Vagina (tissue), 2 donors: ENCODE measurements at regions of chr20 and their contacts with region 1.

Region 1: DNA sequence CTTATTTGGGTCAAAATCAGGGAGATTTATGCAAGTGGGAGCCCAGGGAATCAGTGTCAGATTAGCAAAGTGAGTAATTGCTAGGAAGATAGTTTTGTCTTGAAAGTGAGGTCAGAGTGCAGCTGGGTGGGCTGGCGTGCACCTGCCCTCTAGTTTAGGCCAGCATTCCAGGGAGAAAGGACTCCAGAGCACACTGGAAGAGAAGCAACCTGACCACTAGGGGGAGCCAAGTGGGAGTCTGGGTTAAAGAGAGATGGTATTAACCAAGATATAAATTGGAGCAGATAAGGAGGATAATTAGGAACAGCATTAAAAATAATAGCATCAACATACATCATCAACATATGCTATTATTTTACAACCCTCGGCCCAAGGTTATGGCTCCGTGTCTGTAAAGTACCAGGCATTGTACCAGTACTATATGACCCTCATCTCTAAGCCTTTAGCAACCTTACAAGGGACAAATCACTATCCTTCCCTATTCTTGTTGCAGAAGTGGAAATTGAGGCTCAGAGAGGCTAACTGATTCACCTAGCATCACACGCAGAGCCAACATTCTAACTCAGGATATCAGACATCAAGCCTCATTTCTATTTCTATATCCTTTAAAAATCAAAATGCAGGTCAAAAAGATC is 57.8 kb downstream of the SLC2A10 start:
- DNase-seq: no peak
- H3K4me3 ChIP-seq: no peak overlapping the region
- H3K27ac ChIP-seq: no peak overlapping the region
- H3K4me1 ChIP-seq: no peaks in the 10 kb centered on the region
- H3K27me3 ChIP-seq: no peaks in the 10 kb centered on the region
- CTCF ChIP-seq: no peak
- POLR2A ChIP-seq: no peak

Region 2: GRCh38 chr20:47150403-47151152 is 383.3 kb after region 1 on chr20:
- intact Hi-C with region 1: loop called (anchors 10 kb)
- DNase-seq: no peak
- H3K4me3 ChIP-seq: no peak overlapping the region
- H3K27ac ChIP-seq: no peak overlapping the region
- H3K4me1 ChIP-seq: no peaks in the 10 kb centered on the region
- H3K27me3 ChIP-seq: no peaks in the 10 kb centered on the region
- CTCF ChIP-seq: peak in 2 of 3 experiments; percentile 25 to 59
- POLR2A ChIP-seq: no peak

Region 3: DNA sequence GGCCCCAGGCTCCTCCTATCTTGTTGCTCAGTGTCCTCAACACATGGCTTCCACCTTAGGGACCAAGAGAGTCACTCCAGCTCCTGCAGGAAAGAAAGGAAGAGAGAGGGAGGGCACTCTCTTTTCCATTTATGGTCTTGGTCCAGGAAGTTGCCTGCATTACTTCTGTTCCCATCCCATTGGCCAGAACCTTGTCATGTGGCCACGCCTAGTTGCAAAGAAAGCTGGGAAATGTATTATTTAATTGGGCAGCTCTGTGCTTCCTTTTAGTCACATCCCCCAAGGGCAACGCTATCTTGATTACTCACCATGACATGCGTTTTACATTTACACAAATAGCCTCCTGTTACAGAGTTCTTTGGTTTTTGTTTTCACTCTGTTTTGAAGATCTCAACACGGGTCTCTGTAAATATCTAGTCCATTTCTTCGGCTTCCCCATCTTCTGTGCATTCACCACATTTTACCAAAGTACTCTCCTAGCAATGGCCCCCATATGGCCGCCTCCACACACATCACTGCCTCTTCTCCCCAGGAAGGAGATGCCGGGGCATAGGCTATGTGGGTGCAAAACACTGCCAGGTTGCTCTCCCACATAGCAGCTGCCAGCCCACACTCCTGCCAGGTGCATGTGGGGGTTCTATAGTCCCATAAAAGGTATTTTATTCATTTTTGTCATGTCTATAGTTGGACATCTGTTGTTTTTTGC is 624.9 kb after region 1 on chr20:
- intact Hi-C with region 1: no loop called
- DNase-seq: no peak
- H3K4me3 ChIP-seq: no peak overlapping the region
- H3K27ac ChIP-seq: peak overlapping the region; percentile 42
- H3K4me1 ChIP-seq: no peaks in the 10 kb centered on the region
- H3K27me3 ChIP-seq: no peaks in the 10 kb centered on the region
- CTCF ChIP-seq: no peak
- POLR2A ChIP-seq: no peak